ENCODE measurements at regions of chr19 and their contacts with region 1.

Region 1: GRCh38 chr19:18700501-18701249 is 17.2 kb downstream of the CRTC1 start:
- DNase-seq: peak; percentile 59 to 81 (median 70)
- ATAC-seq: peak; percentile 97
- H3K4me3 ChIP-seq: peak overlapping the region; percentile 66
- H3K4me3 Mint-ChIP-seq: peak overlapping the region; percentile 91
- H3K27ac ChIP-seq: peak overlapping the region; percentile 59 to 87
- H3K27ac Mint-ChIP-seq: peak overlapping the region; percentile 88
- H3K4me1 ChIP-seq: peaks cover 43% of the 10 kb centered on the region
- H3K4me1 Mint-ChIP-seq: peaks cover 42% of the 10 kb centered on the region
- H3K27me3 ChIP-seq: no peaks in the 10 kb centered on the region
- H3K27me3 Mint-ChIP-seq: no peaks in the 10 kb centered on the region
- CTCF ChIP-seq: no peak

Region 2: DNA sequence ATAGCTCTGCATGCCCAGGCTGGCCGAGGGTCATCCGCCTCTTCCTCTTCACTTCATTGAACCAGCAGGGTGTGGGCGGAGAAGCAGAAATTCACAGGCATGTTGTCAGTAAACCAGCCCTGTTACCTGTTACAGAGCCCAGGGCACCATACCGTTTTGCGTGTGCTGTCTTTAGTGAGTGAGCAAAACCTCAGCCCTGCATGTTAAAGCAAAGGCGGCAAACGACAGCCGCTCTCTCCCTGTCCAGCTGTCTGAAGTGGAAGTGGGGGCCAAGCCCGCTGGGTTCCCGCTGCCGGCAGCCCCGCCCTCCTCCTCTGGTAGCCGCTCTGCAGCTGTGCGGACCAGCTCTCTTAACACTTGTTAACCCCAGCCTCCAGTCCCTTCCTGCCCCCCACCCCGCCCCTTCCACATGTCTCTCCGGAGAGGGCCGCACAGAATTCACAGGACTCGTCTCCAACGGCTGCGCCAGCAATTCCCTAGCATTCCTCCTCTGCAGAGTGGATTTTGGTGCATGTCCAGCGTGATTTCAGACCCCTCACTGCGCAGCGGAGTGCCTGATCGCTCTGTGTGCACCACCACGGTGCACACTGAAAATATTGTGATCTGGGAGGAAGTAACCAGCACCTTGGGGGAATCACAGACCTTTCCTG is 51.2 kb before region 1 on chr19:
- CTCF ChIA-PET with region 1: no interaction called
- POLR2A ChIA-PET with region 1: no interaction called
- intact Hi-C with region 1: no loop called
- DNase-seq: no peak
- ATAC-seq: no peak
- H3K4me3 ChIP-seq: no peak overlapping the region
- H3K4me3 Mint-ChIP-seq: peak overlapping the region; percentile 20
- H3K27ac ChIP-seq: no peak overlapping the region
- H3K27ac Mint-ChIP-seq: no peak overlapping the region
- H3K4me1 ChIP-seq: peaks cover 9% of the 10 kb centered on the region
- H3K4me1 Mint-ChIP-seq: peaks cover 19% of the 10 kb centered on the region
- H3K27me3 ChIP-seq: no peaks in the 10 kb centered on the region
- H3K27me3 Mint-ChIP-seq: no peaks in the 10 kb centered on the region
- CTCF ChIP-seq: no peak

Region 3: GRCh38 chr19:18683213-18683939 is 17.3 kb before region 1 on chr19 and contains the start of gene CRTC1:
- CTCF ChIA-PET with region 1: no interaction called
- POLR2A ChIA-PET with region 1: interaction called, 14 read pairs
- intact Hi-C with region 1: loop called in 1 of 2 experiments (anchors 2 kb)
- DNase-seq: peak; percentile 92 to 97 (median 94)
- ATAC-seq: peak; percentile 86
- H3K4me3 ChIP-seq: peak within 1 kb of the TSS; percentile 76
- H3K4me3 Mint-ChIP-seq: peak within 1 kb of the TSS; percentile 92
- H3K27ac ChIP-seq: peak within 1 kb of the TSS; percentile 29 to 65
- H3K27ac Mint-ChIP-seq: peak within 1 kb of the TSS; percentile 77
- H3K4me1 ChIP-seq: peaks cover 30% of the 10 kb centered on the region
- H3K4me1 Mint-ChIP-seq: peaks cover 36% of the 10 kb centered on the region
- H3K27me3 ChIP-seq: no peaks in the 10 kb centered on the region
- H3K27me3 Mint-ChIP-seq: no peaks in the 10 kb centered on the region
- CTCF ChIP-seq: no peak
- total RNA-seq, gene CRTC1: 11.8 to 12.2 TPM